A549 (cell line): ENCODE measurements at regions of chr7 and their contacts with region 1.

Region 1: DNA sequence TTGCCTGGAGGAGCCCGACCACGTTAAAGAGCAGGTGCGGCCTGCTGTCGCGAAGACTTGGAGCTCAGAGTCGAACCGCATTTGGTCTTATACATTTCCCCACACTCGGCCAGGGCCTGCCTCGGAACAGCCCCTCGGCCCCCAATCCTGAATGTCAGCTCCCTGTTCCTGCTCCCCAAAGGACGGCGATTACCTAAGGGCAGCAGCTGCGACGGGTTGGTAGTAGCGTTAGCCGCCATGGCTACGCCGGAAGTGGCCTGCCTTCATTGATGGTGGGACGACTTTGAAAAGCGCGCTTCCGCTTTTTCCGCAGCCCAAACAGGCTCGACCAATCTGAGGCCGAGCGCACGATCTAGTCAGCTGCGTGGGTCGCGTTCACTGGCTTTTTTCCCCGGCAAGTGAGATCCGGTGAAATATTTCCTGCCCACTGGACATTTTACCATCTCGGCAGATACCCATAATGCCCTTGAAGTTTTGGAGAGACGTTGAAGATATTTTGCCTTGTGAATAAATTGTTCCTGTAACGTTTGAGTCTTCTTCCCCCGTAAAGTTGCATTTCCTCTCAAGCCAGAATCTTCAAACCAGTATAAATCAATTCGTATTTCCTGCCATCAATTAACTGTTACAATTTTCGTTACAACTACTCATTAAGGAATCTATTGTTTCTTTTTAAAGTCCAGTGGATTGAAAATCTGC is at the start of gene LSM5:
- DNase-seq: peak; percentile 72 to 97
- ATAC-seq: peak; percentile 91 to 93
- H3K4me3 ChIP-seq: peak within 1 kb of the TSS; percentile 79
- H3K27ac ChIP-seq: peak within 1 kb of the TSS; percentile 90 to 91
- H3K4me1 ChIP-seq: peaks cover 21% of the 10 kb centered on the region
- CTCF ChIP-seq: no peak
- EP300 ChIP-seq: no peak
- POLR2A ChIP-seq: peak; percentile 75
- RAD21 ChIP-seq: no peak
- polyA plus RNA-seq, gene LSM5: 76.3 and 158 TPM in 2 replicates

Region 2: GRCh38 chr7:32403463-32404229 is 86.6 kb before region 1 on chr7:
- CTCF ChIA-PET with region 1: no interaction called
- POLR2A ChIA-PET with region 1: no interaction called
- DNase-seq: no peak
- ATAC-seq: 0 out of 6 replicates have a peak, but pooled peaks of 1 of the 2 experiments have one; percentile 19
- H3K4me3 ChIP-seq: no peak overlapping the region
- H3K27ac ChIP-seq: no peak overlapping the region
- H3K4me1 ChIP-seq: no peaks in the 10 kb centered on the region
- CTCF ChIP-seq: no peak
- EP300 ChIP-seq: no peak
- POLR2A ChIP-seq: no peak
- RAD21 ChIP-seq: no peak

Region 3: DNA sequence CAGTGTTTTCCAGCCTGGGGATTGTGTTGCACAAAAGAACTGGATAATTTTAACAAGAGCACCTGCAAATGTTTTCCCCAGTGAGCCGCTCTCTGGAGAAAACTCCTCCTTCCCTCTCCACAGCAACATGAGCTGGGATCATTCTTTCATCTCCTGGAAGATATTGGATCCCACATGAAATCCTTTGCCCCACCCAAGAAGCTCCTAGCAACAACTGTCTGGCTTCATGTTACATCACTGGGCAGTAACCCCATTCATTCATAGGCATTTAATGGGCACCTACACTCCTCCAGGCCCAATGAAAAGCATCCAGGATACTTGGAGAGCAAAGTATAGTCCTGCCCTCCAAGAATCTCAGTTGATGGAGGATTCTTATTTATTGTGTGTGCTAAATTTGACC is 27.3 kb before region 1 on chr7:
- CTCF ChIA-PET with region 1: no interaction called
- POLR2A ChIA-PET with region 1: interaction called, 14 read pairs
- DNase-seq: no peak
- ATAC-seq: no peak
- H3K4me3 ChIP-seq: no peak overlapping the region
- H3K27ac ChIP-seq: no peak overlapping the region
- H3K4me1 ChIP-seq: 0 out of 3 replicates have a peak, but pooled peaks cover 3% of the 10 kb centered on the region
- CTCF ChIP-seq: no peak
- EP300 ChIP-seq: no peak
- POLR2A ChIP-seq: no peak
- RAD21 ChIP-seq: no peak